Activated B cell treated with CpG ODN at 0.5 μM for 24 hours (primary cell): ENCODE measurements at regions of chr10 and their contacts with region 1.

Region 1: GRCh38 chr10:26829810-26830515 is 30.8 kb downstream of the ABI1 start:
- DNase-seq: no peak
- ATAC-seq: no peak
- H3K4me3 Mint-ChIP-seq: peak overlapping the region; percentile 2
- H3K27ac Mint-ChIP-seq: peak overlapping the region; percentile 19
- H3K4me1 Mint-ChIP-seq: peaks cover 71% of the 10 kb centered on the region
- H3K27me3 Mint-ChIP-seq: no peaks in the 10 kb centered on the region
- CTCF ChIP-seq: no peak

Region 2: GRCh38 chr10:26815500-26815899 is 14.5 kb before region 1 on chr10:
- CTCF ChIA-PET with region 1: interaction called, 3 read pairs
- POLR2A ChIA-PET with region 1: interaction called, 3 read pairs
- intact Hi-C with region 1: loop called (anchors 2 kb)
- DNase-seq: no peak
- ATAC-seq: no peak
- H3K4me3 Mint-ChIP-seq: no peak overlapping the region
- H3K27ac Mint-ChIP-seq: no peak overlapping the region
- H3K4me1 Mint-ChIP-seq: peaks cover 63% of the 10 kb centered on the region
- H3K27me3 Mint-ChIP-seq: no peaks in the 10 kb centered on the region
- CTCF ChIP-seq: no peak